ENCODE measurements at regions of chr1 and their contacts with region 1.

Region 1: DNA sequence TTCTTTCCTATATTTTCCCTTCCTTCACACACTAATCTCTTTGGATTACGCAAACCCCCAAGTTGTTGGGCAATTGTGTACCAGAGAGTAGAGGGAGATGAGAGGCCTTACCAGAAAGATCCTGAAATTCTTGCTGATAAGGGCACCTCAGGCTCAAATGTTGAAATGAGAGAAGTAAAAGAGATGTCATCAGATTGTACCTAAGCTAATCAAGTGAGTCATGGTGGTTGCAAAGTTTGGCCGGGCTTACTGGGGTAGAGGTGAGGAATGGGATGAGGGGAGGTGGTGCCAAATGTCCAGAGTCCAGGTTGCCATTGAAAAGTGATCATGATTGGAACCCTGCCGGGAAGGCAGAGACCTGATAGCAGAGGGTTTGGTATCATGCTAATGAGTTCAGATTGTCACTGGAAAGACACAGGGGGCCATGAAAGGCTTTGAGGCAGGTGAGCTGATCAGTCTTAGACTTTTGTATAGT is 43.1 kb downstream of the OPTC start:
- DNase-seq: peak; percentile 86 to 89
- H3K4me3 ChIP-seq: no peak overlapping the region
- H3K4me3 Mint-ChIP-seq: peak overlapping the region; percentile 49
- H3K27ac Mint-ChIP-seq: peak overlapping the region; percentile 92
- H3K4me1 ChIP-seq: peaks cover 34% of the 10 kb centered on the region
- H3K4me1 Mint-ChIP-seq: peaks cover 23% of the 10 kb centered on the region
- H3K27me3 ChIP-seq: no peaks in the 10 kb centered on the region
- H3K27me3 Mint-ChIP-seq: no peaks in the 10 kb centered on the region
- CTCF ChIP-seq: no peak

Region 2: DNA sequence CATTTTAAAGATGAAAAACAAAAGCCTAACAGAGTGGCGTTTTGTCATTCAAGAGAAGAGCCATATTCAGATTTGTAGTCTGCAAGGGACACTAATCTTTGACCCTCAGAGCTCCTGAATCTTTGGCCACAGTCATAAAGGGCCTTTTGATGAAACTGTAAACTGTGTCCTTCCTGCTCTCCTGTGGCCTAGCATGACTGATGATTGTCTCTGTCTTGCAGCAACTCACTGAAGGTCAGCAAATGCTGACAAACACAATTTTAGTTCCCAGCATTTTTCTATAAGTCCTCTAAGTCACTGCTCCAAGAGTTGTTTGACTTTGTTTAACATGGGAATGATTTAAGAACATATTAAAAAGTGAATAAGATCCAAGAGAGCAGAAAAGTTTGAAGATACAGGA is 116.8 kb before region 1 on chr1:
- CTCF ChIA-PET with region 1: no interaction called
- POLR2A ChIA-PET with region 1: no interaction called
- intact Hi-C with region 1: no loop called
- DNase-seq: no peak
- H3K4me3 ChIP-seq: no peak overlapping the region
- H3K4me3 Mint-ChIP-seq: no peak overlapping the region
- H3K27ac Mint-ChIP-seq: no peak overlapping the region
- H3K4me1 ChIP-seq: no peaks in the 10 kb centered on the region
- H3K4me1 Mint-ChIP-seq: peaks cover 8% of the 10 kb centered on the region
- H3K27me3 ChIP-seq: no peaks in the 10 kb centered on the region
- H3K27me3 Mint-ChIP-seq: no peaks in the 10 kb centered on the region
- CTCF ChIP-seq: no peak

Region 3: DNA sequence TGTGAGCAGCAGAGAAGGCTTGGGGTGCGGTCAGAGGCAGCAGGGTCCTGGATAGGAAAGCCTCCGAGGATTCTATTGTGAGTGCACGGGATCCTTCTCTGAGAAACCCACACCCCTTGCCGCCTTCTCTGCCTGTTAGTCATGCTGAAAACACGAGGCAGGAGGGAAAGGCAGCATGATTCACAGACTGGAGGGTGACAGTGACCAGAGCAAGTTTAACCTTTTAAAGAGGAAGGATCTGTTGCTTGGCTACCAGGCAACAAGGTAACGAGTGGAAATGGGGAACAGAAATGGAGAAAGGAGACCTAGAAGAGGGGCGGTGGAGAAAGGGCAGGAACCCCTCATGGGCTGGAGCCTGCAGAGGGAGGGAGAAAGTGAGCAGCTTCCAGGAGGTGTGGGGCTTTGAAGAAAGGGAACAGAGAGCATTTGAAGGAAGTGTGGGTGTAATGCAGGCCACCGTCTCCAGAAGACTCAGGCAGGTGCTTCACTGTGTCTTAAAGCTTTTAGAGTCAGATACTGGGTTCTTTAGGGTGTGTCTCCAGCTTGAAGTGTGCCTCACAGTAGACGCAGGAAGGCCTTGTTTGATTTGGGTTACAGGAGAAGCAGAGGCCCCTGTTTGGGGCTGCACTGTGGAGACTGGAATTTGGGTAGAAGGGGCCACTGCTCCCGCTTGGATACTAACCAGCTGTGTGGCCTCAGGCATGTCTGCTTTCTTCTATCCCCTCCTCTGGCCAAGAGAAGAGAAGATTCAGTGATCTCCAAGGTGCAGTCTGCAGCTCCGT is 24.0 kb before region 1 on chr1:
- CTCF ChIA-PET with region 1: no interaction called
- POLR2A ChIA-PET with region 1: no interaction called
- intact Hi-C with region 1: loop called (anchors 2 kb)
- DNase-seq: peak; percentile 61 to 72
- H3K4me3 ChIP-seq: no peak overlapping the region
- H3K4me3 Mint-ChIP-seq: peak overlapping the region; percentile 52
- H3K27ac Mint-ChIP-seq: peak overlapping the region; percentile 94
- H3K4me1 ChIP-seq: peaks cover 27% of the 10 kb centered on the region
- H3K4me1 Mint-ChIP-seq: peaks cover 51% of the 10 kb centered on the region
- H3K27me3 ChIP-seq: no peaks in the 10 kb centered on the region
- H3K27me3 Mint-ChIP-seq: no peaks in the 10 kb centered on the region
- CTCF ChIP-seq: no peak

Region 4: DNA sequence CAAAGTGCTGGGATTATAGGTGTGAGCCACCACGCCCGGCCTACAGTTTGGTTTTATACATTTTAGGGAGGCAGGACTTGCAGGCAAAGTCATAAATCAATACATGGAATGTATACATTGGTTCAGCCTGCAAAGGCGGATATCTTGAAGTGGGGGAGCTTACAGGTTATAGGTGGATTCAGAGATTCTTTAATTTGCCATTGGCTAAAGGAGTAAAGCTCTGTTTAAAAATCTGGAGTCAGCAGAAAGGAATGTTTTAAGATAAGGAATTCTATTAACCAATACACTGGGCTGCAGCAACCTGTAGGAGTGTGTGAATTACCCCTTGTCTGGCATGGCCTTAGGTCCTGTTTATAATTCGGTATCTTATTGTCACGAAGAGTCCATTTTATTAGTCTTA is 14.5 kb after region 1 on chr1:
- CTCF ChIA-PET with region 1: interaction called, 5 read pairs
- POLR2A ChIA-PET with region 1: no interaction called
- intact Hi-C with region 1: loop called (anchors 1 kb)
- DNase-seq: peak; percentile 64 to 65
- H3K4me3 ChIP-seq: no peak overlapping the region
- H3K4me3 Mint-ChIP-seq: no peak overlapping the region
- H3K27ac Mint-ChIP-seq: no peak overlapping the region
- H3K4me1 ChIP-seq: peaks cover 16% of the 10 kb centered on the region
- H3K4me1 Mint-ChIP-seq: peaks cover 16% of the 10 kb centered on the region
- H3K27me3 ChIP-seq: no peaks in the 10 kb centered on the region
- H3K27me3 Mint-ChIP-seq: no peaks in the 10 kb centered on the region
- CTCF ChIP-seq: no peak

Region 5: GRCh38 chr1:203584035-203584434 is 47.0 kb after region 1 on chr1:
- CTCF ChIA-PET with region 1: no interaction called
- POLR2A ChIA-PET with region 1: no interaction called
- intact Hi-C with region 1: no loop called
- DNase-seq: no peak
- H3K4me3 ChIP-seq: no peak overlapping the region
- H3K4me3 Mint-ChIP-seq: no peak overlapping the region
- H3K27ac Mint-ChIP-seq: no peak overlapping the region
- H3K4me1 ChIP-seq: no peaks in the 10 kb centered on the region
- H3K4me1 Mint-ChIP-seq: no peaks in the 10 kb centered on the region
- H3K27me3 ChIP-seq: no peaks in the 10 kb centered on the region
- H3K27me3 Mint-ChIP-seq: no peaks in the 10 kb centered on the region
- CTCF ChIP-seq: no peak

Measured in Caco-2 (cell line).